BJ (cell line): ENCODE measurements at regions of chr2 and their contacts with region 1.

Region 1: GRCh38 chr2:68196120-68196716 is 38.5 kb downstream of the PNO1 start:
- DNase-seq: no peak
- H3K4me3 ChIP-seq: no peak overlapping the region
- H3K27me3 ChIP-seq: no peaks in the 10 kb centered on the region
- CTCF ChIP-seq: peak; percentile 67

Region 2: DNA sequence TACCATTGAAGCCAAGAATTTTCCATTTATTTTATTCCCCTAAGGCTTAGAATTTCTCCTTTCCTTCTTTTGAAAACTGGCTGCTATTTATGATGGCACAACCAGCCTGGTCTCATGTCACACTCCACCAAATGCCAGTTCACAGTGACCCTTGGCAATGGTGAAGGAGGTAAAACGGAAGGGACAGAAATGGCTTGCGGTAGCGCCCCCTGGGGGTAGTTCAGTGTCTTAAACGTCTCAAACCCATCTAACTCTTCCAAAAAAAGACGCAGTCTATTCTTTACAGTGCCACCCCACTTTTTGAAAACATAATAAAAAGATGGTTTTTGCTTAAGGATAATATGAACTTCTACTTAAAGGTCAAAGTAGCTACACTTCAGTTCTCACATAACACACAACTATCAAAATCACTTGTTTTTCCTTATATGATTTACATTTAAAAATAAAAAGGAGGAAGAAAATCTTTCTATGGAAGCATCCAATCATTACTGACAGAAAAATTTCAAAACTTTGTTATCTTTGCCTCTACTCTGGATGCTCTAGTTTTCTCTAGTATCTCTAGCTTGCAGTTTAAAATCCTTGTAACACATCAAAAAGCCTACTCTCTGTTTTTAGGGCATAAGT is 10.6 kb before region 1 on chr2:
- CTCF ChIA-PET with region 1: interaction called, 21 read pairs
- POLR2A ChIA-PET with region 1: no interaction called
- DNase-seq: no peak
- H3K4me3 ChIP-seq: no peak overlapping the region
- H3K27me3 ChIP-seq: no peaks in the 10 kb centered on the region
- CTCF ChIP-seq: peak; percentile 62

Region 3: GRCh38 chr2:68214381-68214780 is 18.2 kb after region 1 on chr2:
- CTCF ChIA-PET with region 1: interaction called, 13 read pairs
- POLR2A ChIA-PET with region 1: no interaction called
- DNase-seq: no peak
- H3K4me3 ChIP-seq: no peak overlapping the region
- H3K27me3 ChIP-seq: no peaks in the 10 kb centered on the region
- CTCF ChIP-seq: no peak

Region 4: GRCh38 chr2:68282811-68283418 is 86.7 kb after region 1 on chr2:
- CTCF ChIA-PET with region 1: interaction called, 22 read pairs
- POLR2A ChIA-PET with region 1: interaction called, 4 read pairs
- DNase-seq: no peak
- H3K4me3 ChIP-seq: no peak overlapping the region
- H3K27me3 ChIP-seq: no peaks in the 10 kb centered on the region
- CTCF ChIP-seq: peak; percentile 80

Region 5: GRCh38 chr2:68290901-68291300 is 94.7 kb after region 1 on chr2:
- CTCF ChIA-PET with region 1: interaction called, 10 read pairs
- POLR2A ChIA-PET with region 1: no interaction called
- DNase-seq: no peak
- H3K4me3 ChIP-seq: no peak overlapping the region
- H3K27me3 ChIP-seq: no peaks in the 10 kb centered on the region
- CTCF ChIP-seq: no peak